Prostate gland (tissue), 2 donors: ENCODE measurements at regions of chr7 and their contacts with region 1.

Region 1: GRCh38 chr7:123682690-123683089 is 27.0 kb downstream of the LMOD2 start:
- DNase-seq: peak; percentile 21
- H3K4me3 ChIP-seq: no peak overlapping the region
- H3K27ac ChIP-seq: no peak overlapping the region
- H3K4me1 ChIP-seq: no peaks in the 10 kb centered on the region
- H3K27me3 ChIP-seq: no peaks in the 10 kb centered on the region
- CTCF ChIP-seq: peak in 3 of 4 experiments; percentile 26 to 64 (median 59)
- POLR2A ChIP-seq: no peak

Region 2: DNA sequence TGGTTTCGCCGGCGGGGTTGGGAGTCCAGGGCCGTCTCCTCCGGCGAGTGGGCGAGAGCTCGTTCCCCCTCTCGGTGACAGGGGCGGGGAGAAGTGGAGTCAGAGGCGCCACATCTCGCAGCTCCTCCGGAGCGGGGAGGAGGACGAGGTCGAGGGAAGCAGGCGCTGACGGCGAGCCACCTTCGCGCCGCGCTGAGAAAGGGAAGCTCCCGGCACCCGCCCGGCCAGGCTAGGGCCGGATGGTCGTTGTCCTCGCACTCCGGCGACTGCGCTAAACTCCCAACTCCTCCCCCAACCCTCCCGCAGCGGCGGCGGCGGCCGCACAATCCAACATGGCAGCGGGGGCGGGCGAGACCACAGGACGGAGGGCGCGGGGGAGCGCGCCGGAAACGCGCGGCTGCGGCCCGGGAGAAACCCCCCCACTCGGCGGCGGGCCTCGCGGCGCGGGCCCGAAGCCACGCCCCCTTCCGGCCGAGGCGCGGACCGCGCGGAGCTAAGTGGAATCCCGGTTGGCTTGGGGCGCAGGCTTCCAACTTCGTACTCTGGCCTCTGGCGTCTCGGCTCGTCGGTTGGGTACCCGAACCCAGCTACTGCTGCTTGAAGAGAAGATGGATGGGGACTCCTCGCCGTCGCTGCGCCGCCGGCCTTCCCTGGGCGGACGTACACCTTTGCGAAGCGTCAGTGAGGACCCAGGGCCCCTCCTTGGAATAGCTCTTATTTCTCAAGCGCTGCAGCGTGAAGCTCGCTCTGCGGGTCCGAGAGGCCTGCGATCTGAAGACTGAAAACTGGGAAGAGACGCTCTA is 66.2 kb after region 1 on chr7 and contains the start of gene WASL:
- intact Hi-C with region 1: loop called (anchors 2 kb)
- DNase-seq: peak; percentile 90
- H3K4me3 ChIP-seq: peak within 1 kb of the TSS; percentile 85 to 88
- H3K27ac ChIP-seq: peak within 1 kb of the TSS; percentile 95 to 97
- H3K4me1 ChIP-seq: no peaks in the 10 kb centered on the region
- H3K27me3 ChIP-seq: no peaks in the 10 kb centered on the region
- CTCF ChIP-seq: peak in 2 of 4 experiments; percentile 45 to 58
- POLR2A ChIP-seq: peak; percentile 95
- total RNA-seq, gene WASL: 37.7 to 64.9 TPM